Activated T-helper 1 cell treated with anti-CD3 and anti-CD28 coated beads, Interleukin-12 subunit alpha, Interleukin-12 subunit beta, Interleukin-2, Interleukin-4 antibody, amounts not matched to agents 30 ng/mL and 10 ng/mL and 1 ng/mL, durations not matched to agents 14 hours and 24 hours and 36 hours (primary cell): ENCODE measurements at regions of chr3 and their contacts with region 1.

Region 1: GRCh38 chr3:57597122-57597923 is at the start of gene ARF4:
- DNase-seq: peak; percentile 100
- H3K4me3 Mint-ChIP-seq: peak within 1 kb of the TSS; percentile 98
- H3K27ac Mint-ChIP-seq: peak within 1 kb of the TSS; percentile 100
- H3K4me1 Mint-ChIP-seq: peaks cover 40% of the 10 kb centered on the region
- H3K27me3 Mint-ChIP-seq: no peaks in the 10 kb centered on the region
- total RNA-seq, gene ARF4: 93.2 and 97.0 TPM in 2 replicates

Region 2: GRCh38 chr3:56725175-56725574 is 872.1 kb before region 1 on chr3:
- intact Hi-C with region 1: loop called (anchors 1 kb)
- DNase-seq: peak; percentile 68
- H3K4me3 Mint-ChIP-seq: peak overlapping the region; percentile 81
- H3K27ac Mint-ChIP-seq: peak overlapping the region; percentile 93
- H3K4me1 Mint-ChIP-seq: peaks cover 69% of the 10 kb centered on the region
- H3K27me3 Mint-ChIP-seq: no peaks in the 10 kb centered on the region

Region 3: DNA sequence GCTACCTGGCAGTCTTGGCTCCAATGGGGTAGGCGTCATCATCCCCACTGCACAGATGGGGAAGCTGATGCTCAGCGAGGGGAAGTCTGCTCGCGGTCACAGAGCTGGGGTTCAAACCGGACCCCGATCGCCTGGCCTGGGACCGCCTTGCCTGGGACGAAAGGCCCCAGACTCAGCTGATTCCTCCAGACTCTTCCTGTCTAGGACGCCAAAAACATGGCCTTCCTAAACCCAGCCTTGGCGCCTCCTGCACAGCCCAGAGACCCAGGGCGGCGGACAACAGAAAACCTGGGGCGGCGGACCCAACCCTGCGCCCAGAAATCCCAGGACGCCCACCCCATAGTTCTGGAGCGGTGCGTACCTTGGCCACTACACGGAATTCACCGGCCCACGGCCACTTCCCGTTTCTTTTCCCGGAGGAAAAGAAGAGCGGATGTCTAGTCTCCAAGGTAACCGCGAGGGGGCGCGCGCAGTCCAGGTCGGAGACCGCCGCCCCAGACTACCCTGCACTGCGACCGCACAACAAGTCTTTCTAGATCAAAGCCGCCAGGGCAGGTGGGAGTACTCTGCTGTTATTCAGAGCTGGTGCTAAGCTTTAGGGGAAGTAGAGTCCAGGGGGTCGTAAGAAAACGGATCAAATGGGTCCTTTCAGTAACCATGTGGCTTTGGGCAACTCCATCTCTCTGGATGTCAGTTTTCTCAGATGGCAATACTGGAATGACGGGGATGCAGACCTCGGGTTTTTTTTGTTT is 427.3 kb before region 1 on chr3:
- intact Hi-C with region 1: loop called (anchors 10 kb)
- DNase-seq: peak; percentile 33
- H3K4me3 Mint-ChIP-seq: peak overlapping the region; percentile 64
- H3K27ac Mint-ChIP-seq: no peak overlapping the region
- H3K4me1 Mint-ChIP-seq: peaks cover 5% of the 10 kb centered on the region
- H3K27me3 Mint-ChIP-seq: peaks cover 52% of the 10 kb centered on the region

Region 4: DNA sequence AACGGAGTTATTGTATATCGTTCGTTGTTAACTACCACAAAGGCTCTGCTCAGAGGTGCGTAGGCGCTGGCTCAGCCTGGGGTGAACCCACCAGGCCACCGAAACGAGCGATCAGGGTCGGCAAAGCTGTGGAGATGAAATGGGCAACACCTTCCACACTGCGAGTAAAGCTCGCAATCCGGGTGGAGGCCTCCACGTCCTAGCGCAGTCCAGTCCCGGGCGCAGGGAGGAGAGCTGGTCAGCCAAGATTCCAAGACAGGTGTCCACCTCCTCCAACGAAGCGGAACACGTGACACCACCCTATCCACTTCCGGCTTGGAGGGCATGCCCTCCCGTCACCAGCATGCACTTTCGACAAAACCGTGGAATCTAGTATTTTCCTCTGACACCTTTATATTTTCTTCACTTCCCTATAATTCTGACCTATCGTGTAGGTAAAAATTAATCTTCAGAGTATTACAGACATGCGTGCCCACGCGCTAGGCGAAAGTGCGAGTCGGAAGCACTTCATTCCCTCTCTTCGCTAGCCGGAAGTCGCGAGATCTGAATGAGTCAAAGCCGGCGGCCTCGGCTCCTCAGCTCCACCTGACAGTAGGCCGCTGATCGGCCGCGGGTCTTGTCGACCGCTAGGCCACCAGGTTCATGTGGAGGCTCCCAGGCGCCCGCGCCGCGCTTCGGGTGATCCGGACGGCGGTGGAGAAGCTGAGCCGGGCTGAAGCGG is 41.4 kb before region 1 on chr3 and contains the start of gene PDE12:
- intact Hi-C with region 1: loop called (anchors 1 kb)
- DNase-seq: peak; percentile 78
- H3K4me3 Mint-ChIP-seq: peak within 1 kb of the TSS; percentile 100
- H3K27ac Mint-ChIP-seq: peak within 1 kb of the TSS; percentile 100
- H3K4me1 Mint-ChIP-seq: peaks cover 47% of the 10 kb centered on the region
- H3K27me3 Mint-ChIP-seq: no peaks in the 10 kb centered on the region
- total RNA-seq, gene PDE12: 34.7 and 34.9 TPM in 2 replicates

Region 5: GRCh38 chr3:57616233-57616632 is 18.9 kb after region 1 on chr3:
- intact Hi-C with region 1: no loop called
- DNase-seq: no peak
- H3K4me3 Mint-ChIP-seq: no peak overlapping the region
- H3K27ac Mint-ChIP-seq: no peak overlapping the region
- H3K4me1 Mint-ChIP-seq: no peaks in the 10 kb centered on the region
- H3K27me3 Mint-ChIP-seq: no peaks in the 10 kb centered on the region

Region 6: DNA sequence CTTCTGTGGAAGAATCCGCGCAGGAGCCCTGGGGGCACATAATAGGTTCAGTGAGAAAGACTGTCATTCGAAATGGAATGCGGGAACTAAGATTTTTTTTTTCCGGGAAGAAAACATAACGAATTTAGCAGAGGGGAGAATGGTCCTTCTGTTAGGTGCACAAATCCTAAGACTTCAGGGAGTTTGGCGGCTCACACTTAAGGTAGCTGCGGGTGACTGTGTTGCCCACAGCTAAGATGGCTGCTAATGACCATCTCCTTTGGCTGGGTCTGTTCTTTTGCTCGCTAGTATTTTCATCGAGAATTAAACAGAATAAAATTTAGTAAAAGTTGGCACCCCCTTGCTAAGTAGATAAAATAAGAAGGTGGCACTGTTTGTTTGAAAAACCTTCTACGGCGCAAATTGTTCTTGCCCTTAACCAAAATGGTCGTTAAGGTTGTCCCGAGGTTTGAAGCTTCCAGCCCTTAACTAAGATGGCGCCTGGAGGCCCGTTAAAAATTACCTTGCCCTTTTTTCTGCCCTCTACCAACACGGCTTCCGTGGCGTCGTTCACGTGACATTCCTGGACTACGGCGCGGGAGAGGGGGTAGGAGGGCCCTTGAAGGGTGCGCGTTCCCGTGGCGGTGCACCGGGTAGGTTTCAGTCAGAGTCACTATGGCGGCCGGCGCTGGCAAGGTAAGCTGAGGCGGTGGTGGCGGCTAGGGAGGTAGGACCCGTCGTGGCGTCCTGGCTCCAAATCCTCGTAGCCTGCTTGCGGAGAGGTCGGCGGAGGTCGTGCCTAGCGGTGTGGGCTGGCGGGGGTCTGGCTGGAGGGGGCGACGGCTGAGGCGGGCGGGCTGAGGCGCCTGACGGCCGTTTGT is 158.6 kb after region 1 on chr3 and contains the start of gene SLMAP:
- intact Hi-C with region 1: loop called (anchors 1 kb)
- DNase-seq: peak; percentile 95
- H3K4me3 Mint-ChIP-seq: peak within 1 kb of the TSS; percentile 98
- H3K27ac Mint-ChIP-seq: peak within 1 kb of the TSS; percentile 97
- H3K4me1 Mint-ChIP-seq: peaks cover 39% of the 10 kb centered on the region
- H3K27me3 Mint-ChIP-seq: peaks cover 6% of the 10 kb centered on the region
- total RNA-seq, gene SLMAP: 60.3 and 64.0 TPM in 2 replicates

Region 7: GRCh38 chr3:57918123-57918837 is 321.0 kb after region 1 on chr3:
- intact Hi-C with region 1: no loop called
- DNase-seq: no peak
- H3K4me3 Mint-ChIP-seq: no peak overlapping the region
- H3K27ac Mint-ChIP-seq: no peak overlapping the region
- H3K4me1 Mint-ChIP-seq: no peaks in the 10 kb centered on the region
- H3K27me3 Mint-ChIP-seq: no peaks in the 10 kb centered on the region

Region 8: DNA sequence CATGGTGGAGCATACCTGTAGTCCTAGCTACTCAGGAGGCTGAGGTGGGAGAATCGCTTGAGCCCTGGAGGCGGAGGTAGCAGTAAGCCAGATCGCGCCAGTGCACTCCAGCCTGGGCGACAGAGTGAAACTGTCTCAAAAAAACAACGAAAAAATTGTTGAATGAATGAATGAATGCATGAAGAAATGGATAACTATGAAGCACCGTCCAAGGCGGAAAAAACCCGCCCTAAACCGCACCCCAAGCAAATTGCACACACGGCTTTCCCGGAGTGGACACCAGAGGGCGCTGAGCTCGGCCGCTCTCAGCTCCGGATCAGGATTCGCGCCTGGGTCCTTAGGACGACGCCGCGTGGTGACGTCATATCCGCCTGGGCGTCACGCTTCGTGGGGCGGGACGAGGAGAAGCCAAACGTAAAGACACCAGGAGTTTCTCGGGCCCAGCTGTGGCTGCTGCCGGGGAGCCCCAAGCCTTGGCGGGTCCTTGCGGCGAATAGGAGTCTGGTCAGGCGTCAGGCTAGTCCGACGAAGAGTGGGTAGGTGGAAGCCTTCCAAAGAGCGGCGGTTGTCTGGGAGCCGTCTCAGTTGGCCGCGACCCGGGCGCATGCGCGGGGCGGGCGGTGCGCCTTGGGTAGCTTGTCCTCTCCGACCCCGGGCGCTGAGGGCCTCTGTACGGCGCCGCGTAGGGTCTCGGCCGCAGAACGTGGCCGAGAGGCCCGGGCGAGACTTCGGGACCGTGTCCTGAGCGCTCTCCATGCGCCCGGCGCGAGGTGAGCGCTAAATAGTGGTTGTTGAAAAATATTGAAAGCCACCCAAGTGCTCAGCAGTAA is 708.8 kb after region 1 on chr3 and contains the starts of genes HTD2 and RPP14:
- intact Hi-C with region 1: loop called (anchors 1 kb)
- DNase-seq: peak; percentile 98
- H3K4me3 Mint-ChIP-seq: peak within 1 kb of the TSS; percentile 95
- H3K27ac Mint-ChIP-seq: peak within 1 kb of the TSS; percentile 99
- H3K4me1 Mint-ChIP-seq: peaks cover 27% of the 10 kb centered on the region
- H3K27me3 Mint-ChIP-seq: peaks cover 15% of the 10 kb centered on the region
- total RNA-seq, gene HTD2: 11.5 and 13.6 TPM in 2 replicates
- total RNA-seq, gene RPP14: 22.7 and 23.4 TPM in 2 replicates